ENCODE measurements at regions of chr18 and their contacts with region 1.

Region 1: GRCh38 chr18:23377669-23378301 is 75.3 kb upstream of the RIOK3 start:
- DNase-seq: no peak
- H3K4me3 Mint-ChIP-seq: no peak overlapping the region
- H3K27ac Mint-ChIP-seq: peak overlapping the region; percentile 25
- H3K4me1 Mint-ChIP-seq: peaks cover 33% of the 10 kb centered on the region
- H3K27me3 Mint-ChIP-seq: no peaks in the 10 kb centered on the region
- CTCF ChIP-seq: no peak

Region 2: GRCh38 chr18:23071285-23071684 is 306.5 kb before region 1 on chr18:
- CTCF ChIA-PET with region 1: interaction called, 3 read pairs
- intact Hi-C with region 1: loop called (anchors 10 kb)
- DNase-seq: no peak
- H3K4me3 Mint-ChIP-seq: no peak overlapping the region
- H3K27ac Mint-ChIP-seq: no peak overlapping the region
- H3K4me1 Mint-ChIP-seq: peaks cover 8% of the 10 kb centered on the region
- H3K27me3 Mint-ChIP-seq: no peaks in the 10 kb centered on the region
- CTCF ChIP-seq: no peak

Region 3: GRCh38 chr18:23165271-23166068 is 212.3 kb before region 1 on chr18:
- CTCF ChIA-PET with region 1: interaction called, 15 read pairs
- intact Hi-C with region 1: no loop called
- DNase-seq: no peak
- H3K4me3 Mint-ChIP-seq: no peak overlapping the region
- H3K27ac Mint-ChIP-seq: no peak overlapping the region
- H3K4me1 Mint-ChIP-seq: no peaks in the 10 kb centered on the region
- H3K27me3 Mint-ChIP-seq: no peaks in the 10 kb centered on the region
- CTCF ChIP-seq: no peak

Region 4: GRCh38 chr18:23228102-23229061 is 149.4 kb before region 1 on chr18:
- CTCF ChIA-PET with region 1: interaction called, 9 read pairs
- intact Hi-C with region 1: loop called (anchors 10 kb)
- DNase-seq: no peak
- H3K4me3 Mint-ChIP-seq: peak overlapping the region; percentile 22
- H3K27ac Mint-ChIP-seq: peak overlapping the region; percentile 86
- H3K4me1 Mint-ChIP-seq: peaks cover 65% of the 10 kb centered on the region
- H3K27me3 Mint-ChIP-seq: no peaks in the 10 kb centered on the region
- CTCF ChIP-seq: no peak

Region 5: GRCh38 chr18:23283916-23284430 is 93.8 kb before region 1 on chr18:
- CTCF ChIA-PET with region 1: no interaction called
- intact Hi-C with region 1: loop called (anchors 5 kb)
- DNase-seq: peak; percentile 73
- H3K4me3 Mint-ChIP-seq: peak overlapping the region; percentile 3
- H3K27ac Mint-ChIP-seq: peak overlapping the region; percentile 89
- H3K4me1 Mint-ChIP-seq: peaks cover 71% of the 10 kb centered on the region
- H3K27me3 Mint-ChIP-seq: no peaks in the 10 kb centered on the region
- CTCF ChIP-seq: no peak

Region 6: DNA sequence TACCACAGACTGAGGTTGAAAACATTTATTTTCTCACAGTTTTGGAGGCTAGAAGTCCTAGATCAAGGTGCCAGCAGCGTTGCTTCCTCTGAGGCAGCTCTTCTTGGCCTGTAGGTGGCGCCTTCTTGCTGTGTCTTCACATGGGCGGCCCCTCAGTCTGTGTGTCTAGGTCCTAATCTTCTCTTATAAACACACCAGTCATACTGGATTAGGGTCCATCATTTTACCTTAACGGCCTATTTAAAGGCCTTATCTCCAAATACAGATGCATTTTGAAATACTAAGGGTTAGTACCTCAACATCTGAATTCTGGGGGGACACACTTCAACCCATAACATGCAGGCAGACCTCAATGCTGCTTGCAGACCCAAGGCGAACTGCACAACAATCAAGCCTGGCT is 121.1 kb after region 1 on chr18:
- CTCF ChIA-PET with region 1: no interaction called
- intact Hi-C with region 1: no loop called
- DNase-seq: peak; percentile 72
- H3K4me3 Mint-ChIP-seq: no peak overlapping the region
- H3K27ac Mint-ChIP-seq: no peak overlapping the region
- H3K4me1 Mint-ChIP-seq: peaks cover 17% of the 10 kb centered on the region
- H3K27me3 Mint-ChIP-seq: no peaks in the 10 kb centered on the region
- CTCF ChIP-seq: peak; percentile 81